SK-N-SH (cell line): ENCODE measurements at regions of chr5 and their contacts with region 1.

Region 1: GRCh38 chr5:171342362-171343111 is 33.5 kb downstream of the TLX3 start:
- DNase-seq: peak; percentile 73
- H3K4me3 ChIP-seq: no peak overlapping the region; a peak in 1 of 4 replicates
- H3K27ac ChIP-seq: no peak overlapping the region
- H3K4me1 ChIP-seq: peaks cover 0 to 2% of the 10 kb centered on the region in 2 experiments; a peak in 1 of 4 replicates
- H3K27me3 ChIP-seq: no peaks in the 10 kb centered on the region
- CTCF ChIP-seq: peak; percentile 84
- EP300 ChIP-seq: no peak
- RAD21 ChIP-seq: peak; percentile 96

Region 2: DNA sequence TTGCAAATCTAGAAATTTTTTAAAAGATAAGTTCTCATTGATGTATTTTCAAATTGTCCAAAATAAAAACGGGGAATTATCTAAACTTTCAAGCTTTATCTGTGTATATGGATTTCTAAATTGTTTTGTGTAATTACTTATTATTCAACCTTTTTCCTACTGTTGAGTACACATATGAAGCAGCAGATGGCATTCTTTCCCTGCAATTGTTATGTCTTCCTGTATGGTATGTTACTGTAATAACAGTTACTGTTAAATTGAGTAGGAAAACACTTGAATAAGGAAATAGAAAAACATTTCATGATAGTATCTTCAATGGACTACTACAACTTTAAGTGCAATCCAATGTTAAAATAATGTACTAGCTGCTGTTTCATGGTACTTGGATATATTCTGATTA is 355.9 kb before region 1 on chr5:
- CTCF ChIA-PET with region 1: interaction called, 47 read pairs
- POLR2A ChIA-PET with region 1: no interaction called
- DNase-seq: peak; percentile 10
- H3K4me3 ChIP-seq: no peak overlapping the region
- H3K27ac ChIP-seq: peak overlapping the region in 1 of 2 experiments; percentile 34; a peak in 1 of 4 replicates
- H3K4me1 ChIP-seq: peaks cover 0 to 6% of the 10 kb centered on the region in 2 experiments; a peak in 3 of 4 replicates
- H3K27me3 ChIP-seq: no peaks in the 10 kb centered on the region
- CTCF ChIP-seq: peak; percentile 49
- EP300 ChIP-seq: no peak
- RAD21 ChIP-seq: peak; percentile 90

Region 3: GRCh38 chr5:171207256-171207847 is 135.2 kb before region 1 on chr5:
- CTCF ChIA-PET with region 1: interaction called, 62 read pairs
- POLR2A ChIA-PET with region 1: interaction called, 3 read pairs
- DNase-seq: peak; percentile 15
- H3K4me3 ChIP-seq: no peak overlapping the region
- H3K27ac ChIP-seq: peak overlapping the region in 1 of 2 experiments; percentile 60; a peak in 2 of 4 replicates
- H3K4me1 ChIP-seq: peaks cover 0 to 28% of the 10 kb centered on the region in 2 experiments; a peak in 2 of 4 replicates
- H3K27me3 ChIP-seq: no peaks in the 10 kb centered on the region
- CTCF ChIP-seq: peak; percentile 74
- EP300 ChIP-seq: no peak
- RAD21 ChIP-seq: peak; percentile 73

Region 4: DNA sequence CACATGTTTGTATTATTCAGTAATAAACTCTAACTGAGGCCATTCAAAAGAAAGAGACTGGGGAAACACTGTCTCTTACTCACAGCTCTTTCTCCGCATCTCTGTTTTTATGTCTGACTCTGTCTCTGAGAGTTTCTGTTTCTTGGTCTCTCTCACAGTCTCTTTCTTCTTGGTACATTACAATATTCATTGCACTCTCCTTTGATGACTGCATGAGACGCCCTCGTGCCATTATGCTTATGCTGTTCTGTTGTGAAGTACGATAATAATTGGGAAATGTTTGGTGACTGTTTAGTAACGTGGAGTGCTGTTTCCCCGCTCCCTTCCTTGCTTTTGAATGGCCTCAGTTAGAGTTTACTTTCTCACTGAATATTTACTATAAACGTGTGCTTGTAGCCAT is 58.8 kb before region 1 on chr5:
- CTCF ChIA-PET with region 1: interaction called, 13 read pairs
- POLR2A ChIA-PET with region 1: no interaction called
- DNase-seq: no peak
- H3K4me3 ChIP-seq: no peak overlapping the region
- H3K27ac ChIP-seq: no peak overlapping the region
- H3K4me1 ChIP-seq: peaks cover 0 to 5% of the 10 kb centered on the region in 2 experiments; a peak in 2 of 4 replicates
- H3K27me3 ChIP-seq: no peaks in the 10 kb centered on the region
- CTCF ChIP-seq: no peak
- EP300 ChIP-seq: no peak
- RAD21 ChIP-seq: no peak

Region 5: DNA sequence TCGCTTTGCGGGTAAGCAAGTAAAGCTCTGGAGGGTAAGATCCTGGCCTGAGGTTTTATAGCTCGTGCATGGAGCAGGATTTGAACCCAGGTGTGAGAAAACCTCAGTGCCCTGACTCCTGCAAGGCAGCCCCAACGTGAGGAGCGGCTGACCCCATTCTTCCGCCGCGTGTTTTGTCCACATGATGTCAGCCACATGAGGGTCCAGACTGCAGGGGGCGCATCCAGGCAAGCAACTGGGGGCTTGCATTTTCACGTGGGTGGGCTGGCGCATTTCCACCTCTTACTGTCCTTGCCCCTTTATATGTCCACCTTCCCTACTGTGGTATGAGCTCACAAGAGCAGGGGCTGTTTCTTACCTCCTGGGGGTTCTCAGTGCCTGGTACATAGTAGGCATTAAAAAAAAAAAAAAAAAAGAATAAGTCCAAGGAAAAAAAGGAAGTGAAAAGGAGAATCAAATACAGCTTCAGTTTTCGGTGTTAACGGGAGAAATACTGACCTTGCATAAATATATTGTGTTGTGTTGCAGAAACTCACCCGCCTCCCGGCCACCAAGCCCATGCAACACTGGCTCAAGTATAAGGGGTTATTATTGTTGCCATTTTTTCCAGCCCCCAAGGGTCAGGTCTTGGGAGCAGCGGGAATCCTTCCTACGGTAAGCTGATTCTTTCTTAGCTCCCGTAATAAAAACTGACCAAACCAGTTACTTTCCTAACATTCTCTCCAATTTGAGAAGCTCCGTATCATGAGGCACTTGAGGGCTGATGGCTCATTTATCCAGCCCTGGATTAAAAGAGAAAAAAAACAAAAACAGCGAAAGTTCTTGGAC is 18.5 kb before region 1 on chr5:
- CTCF ChIA-PET with region 1: interaction called, 27 read pairs
- POLR2A ChIA-PET with region 1: no interaction called
- DNase-seq: no peak
- H3K4me3 ChIP-seq: no peak overlapping the region
- H3K27ac ChIP-seq: peak overlapping the region in 1 of 2 experiments; percentile 97; a peak in 2 of 4 replicates
- H3K4me1 ChIP-seq: peaks cover 0 to 26% of the 10 kb centered on the region in 2 experiments; a peak in 2 of 4 replicates
- H3K27me3 ChIP-seq: no peaks in the 10 kb centered on the region
- CTCF ChIP-seq: no peak
- EP300 ChIP-seq: no peak
- RAD21 ChIP-seq: no peak

Region 6: GRCh38 chr5:171363846-171364245 is 21.3 kb after region 1 on chr5:
- CTCF ChIA-PET with region 1: interaction called, 10 read pairs
- POLR2A ChIA-PET with region 1: no interaction called
- DNase-seq: no peak
- H3K4me3 ChIP-seq: no peak overlapping the region
- H3K27ac ChIP-seq: no peak overlapping the region
- H3K4me1 ChIP-seq: no peaks in the 10 kb centered on the region
- H3K27me3 ChIP-seq: no peaks in the 10 kb centered on the region
- CTCF ChIP-seq: no peak
- EP300 ChIP-seq: no peak
- RAD21 ChIP-seq: no peak